ENCODE measurements at regions of chr13 and their contacts with region 1.

Region 1: DNA sequence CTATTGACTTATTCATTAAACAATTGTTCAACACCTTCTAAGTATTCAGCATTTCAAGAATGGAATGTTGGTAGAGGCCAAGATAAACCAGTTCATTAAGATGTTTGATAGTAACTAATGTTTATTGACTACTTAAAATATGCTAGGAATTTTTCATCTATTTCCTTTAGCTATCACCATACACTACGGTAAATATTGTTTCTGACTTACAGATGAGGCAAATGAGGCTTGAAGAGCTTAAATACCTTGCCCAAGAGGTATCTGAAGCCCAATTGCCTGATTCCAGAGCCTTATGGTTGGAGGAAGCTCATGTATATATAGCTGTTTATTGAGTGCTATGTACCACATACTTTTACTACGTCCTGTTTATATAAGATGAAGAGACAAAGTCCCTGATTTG is 286.2 kb downstream of the NDFIP2 start:
- DNase-seq: peak; percentile 73
- H3K4me3 ChIP-seq: no peak overlapping the region
- H3K27ac ChIP-seq: peak overlapping the region; percentile 76
- H3K4me1 ChIP-seq: peaks cover 14% of the 10 kb centered on the region
- H3K27me3 ChIP-seq: no peaks in the 10 kb centered on the region
- CTCF ChIP-seq: no peak
- POLR2A ChIP-seq: no peak

Region 2: GRCh38 chr13:79724348-79725103 is 42.6 kb before region 1 on chr13:
- CTCF ChIA-PET with region 1: no interaction called
- POLR2A ChIA-PET with region 1: no interaction called
- dilution Hi-C with region 1: no loop called
- intact Hi-C with region 1: loop called (anchors 2 kb)
- DNase-seq: peak; percentile 93
- H3K4me3 ChIP-seq: no peak overlapping the region
- H3K27ac ChIP-seq: peak overlapping the region; percentile 24
- H3K4me1 ChIP-seq: peaks cover 3% of the 10 kb centered on the region
- H3K27me3 ChIP-seq: no peaks in the 10 kb centered on the region
- CTCF ChIP-seq: no peak
- POLR2A ChIP-seq: no peak

Region 3: DNA sequence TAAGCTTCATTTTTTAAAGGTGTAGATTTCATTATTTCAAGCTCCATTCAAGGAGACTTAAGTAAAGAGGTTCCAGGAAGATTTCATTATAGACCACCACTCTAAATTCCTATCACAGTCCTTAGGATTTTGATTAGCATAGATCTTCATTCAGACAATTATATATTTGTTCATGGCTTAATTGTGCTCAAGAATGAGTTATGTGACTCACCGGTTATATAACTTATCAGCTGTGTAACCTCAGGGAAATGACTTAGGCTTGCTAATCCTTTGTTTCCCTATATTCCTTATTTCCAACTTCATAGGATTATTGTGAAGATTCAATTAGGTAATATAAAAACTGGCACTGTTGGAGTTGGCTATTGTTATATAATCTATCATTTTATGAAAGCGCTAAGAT is 1206.6 kb after region 1 on chr13:
- CTCF ChIA-PET with region 1: no interaction called
- POLR2A ChIA-PET with region 1: no interaction called
- dilution Hi-C with region 1: no loop called
- intact Hi-C with region 1: loop called (anchors 1 kb)
- DNase-seq: peak; percentile 58
- H3K4me3 ChIP-seq: no peak overlapping the region
- H3K27ac ChIP-seq: peak overlapping the region; percentile 65
- H3K4me1 ChIP-seq: peaks cover 12% of the 10 kb centered on the region
- H3K27me3 ChIP-seq: no peaks in the 10 kb centered on the region
- CTCF ChIP-seq: no peak
- POLR2A ChIP-seq: no peak